ENCODE measurements at regions of chr9 and their contacts with region 1.

Region 1: GRCh38 chr9:21831961-21832509 is 29.6 kb downstream of the MTAP start:
- DNase-seq: peak; percentile 67 to 88
- ATAC-seq: peak; percentile 89 to 96
- H3K4me3 ChIP-seq: no peak overlapping the region
- H3K27ac ChIP-seq: peak overlapping the region; percentile 85 to 90
- H3K4me1 ChIP-seq: peaks cover 52% of the 10 kb centered on the region
- CTCF ChIP-seq: no peak
- EP300 ChIP-seq: peak; percentile 27 to 71; a peak in 2 of 5 replicates
- POLR2A ChIP-seq: no peak
- RAD21 ChIP-seq: no peak

Region 2: DNA sequence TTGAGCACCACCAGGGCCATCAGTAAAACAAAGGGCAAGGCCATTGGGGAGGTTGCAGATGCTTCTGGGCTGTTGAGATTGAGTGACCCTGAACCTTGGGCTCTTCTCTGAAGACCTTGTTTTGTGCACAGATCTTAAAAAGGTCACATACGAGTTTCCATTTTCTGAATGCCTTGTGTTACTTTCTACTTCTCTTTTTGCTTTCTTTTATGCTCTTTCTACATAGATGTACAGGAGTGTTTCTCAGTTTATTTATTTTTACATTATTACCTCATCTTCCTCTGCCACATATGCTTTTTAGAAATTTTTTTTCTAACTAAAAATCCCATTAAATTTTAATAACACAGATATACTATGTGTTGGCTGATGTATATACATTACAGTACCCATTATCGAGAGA is 526.8 kb before region 1 on chr9 and contains the start of gene IFNA5:
- CTCF ChIA-PET with region 1: no interaction called
- POLR2A ChIA-PET with region 1: no interaction called
- DNase-seq: no peak
- ATAC-seq: no peak
- H3K4me3 ChIP-seq: no peak within 1 kb of the TSS
- H3K27ac ChIP-seq: no peak within 1 kb of the TSS
- H3K4me1 ChIP-seq: no peaks in the 10 kb centered on the region
- CTCF ChIP-seq: no peak
- EP300 ChIP-seq: no peak
- POLR2A ChIP-seq: no peak
- RAD21 ChIP-seq: no peak
- polyA plus RNA-seq, gene IFNA5: not detected in 2 replicates

Region 3: DNA sequence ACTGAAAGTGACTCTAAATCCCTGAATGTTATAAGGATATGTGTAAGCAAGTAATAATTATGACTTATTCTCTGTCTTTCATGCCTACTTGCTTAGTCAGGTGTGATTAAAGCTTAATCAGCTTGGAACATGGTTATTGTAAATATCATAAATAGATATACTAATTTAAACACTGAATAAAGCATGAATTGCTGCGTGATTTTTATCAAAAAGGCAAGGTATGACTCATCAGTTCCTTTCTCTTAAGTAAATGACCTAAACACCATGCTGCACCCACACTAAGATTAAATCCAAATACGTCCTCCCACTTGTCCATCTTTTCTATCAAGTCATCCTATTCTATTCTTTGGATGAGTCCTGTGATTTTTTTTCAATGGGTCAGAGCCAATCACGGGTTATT is 154.2 kb before region 1 on chr9:
- CTCF ChIA-PET with region 1: no interaction called
- POLR2A ChIA-PET with region 1: no interaction called
- DNase-seq: peak; percentile 43 to 95
- ATAC-seq: peak; percentile 58 to 78; a peak in 5 of 6 replicates
- H3K4me3 ChIP-seq: peak overlapping the region; percentile 21; the same call in 1 of the 3 replicates
- H3K27ac ChIP-seq: peak overlapping the region; percentile 87 to 94
- H3K4me1 ChIP-seq: peaks cover 77% of the 10 kb centered on the region
- CTCF ChIP-seq: no peak
- EP300 ChIP-seq: peak; percentile 63 to 78; a peak in 3 of 5 replicates
- POLR2A ChIP-seq: no peak
- RAD21 ChIP-seq: peak; percentile 19 to 35; a peak in 3 of 5 replicates

Region 4: DNA sequence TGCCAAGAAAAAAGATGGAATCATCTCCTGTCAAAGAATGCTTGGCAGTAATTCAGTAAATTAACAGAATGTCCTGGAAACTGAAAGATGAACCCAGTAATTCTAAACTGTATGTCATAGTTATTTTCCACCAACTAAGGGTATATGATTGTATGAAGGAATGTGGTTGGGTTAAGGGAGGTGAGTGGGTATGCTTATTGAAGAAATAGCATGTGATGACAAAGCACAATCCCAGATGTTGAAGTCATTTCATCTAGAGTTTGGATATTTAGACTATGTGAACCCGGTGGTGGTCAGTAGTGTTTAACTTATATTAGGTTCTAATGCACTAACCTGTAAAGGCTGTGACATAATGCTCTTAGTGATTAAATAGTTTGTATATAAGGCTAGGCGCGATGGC is 74.8 kb after region 1 on chr9:
- CTCF ChIA-PET with region 1: interaction called, 4 read pairs
- POLR2A ChIA-PET with region 1: interaction called, 11 read pairs
- DNase-seq: peak in 1 of 2 experiments; percentile 0
- ATAC-seq: no peak
- H3K4me3 ChIP-seq: no peak overlapping the region
- H3K27ac ChIP-seq: peak overlapping the region; percentile 12 to 79; a peak in 5 of 6 replicates
- H3K4me1 ChIP-seq: peaks cover 4% of the 10 kb centered on the region; the same call in 1 of the 3 replicates
- CTCF ChIP-seq: no peak
- EP300 ChIP-seq: no peak
- POLR2A ChIP-seq: no peak
- RAD21 ChIP-seq: no peak

Region 5: DNA sequence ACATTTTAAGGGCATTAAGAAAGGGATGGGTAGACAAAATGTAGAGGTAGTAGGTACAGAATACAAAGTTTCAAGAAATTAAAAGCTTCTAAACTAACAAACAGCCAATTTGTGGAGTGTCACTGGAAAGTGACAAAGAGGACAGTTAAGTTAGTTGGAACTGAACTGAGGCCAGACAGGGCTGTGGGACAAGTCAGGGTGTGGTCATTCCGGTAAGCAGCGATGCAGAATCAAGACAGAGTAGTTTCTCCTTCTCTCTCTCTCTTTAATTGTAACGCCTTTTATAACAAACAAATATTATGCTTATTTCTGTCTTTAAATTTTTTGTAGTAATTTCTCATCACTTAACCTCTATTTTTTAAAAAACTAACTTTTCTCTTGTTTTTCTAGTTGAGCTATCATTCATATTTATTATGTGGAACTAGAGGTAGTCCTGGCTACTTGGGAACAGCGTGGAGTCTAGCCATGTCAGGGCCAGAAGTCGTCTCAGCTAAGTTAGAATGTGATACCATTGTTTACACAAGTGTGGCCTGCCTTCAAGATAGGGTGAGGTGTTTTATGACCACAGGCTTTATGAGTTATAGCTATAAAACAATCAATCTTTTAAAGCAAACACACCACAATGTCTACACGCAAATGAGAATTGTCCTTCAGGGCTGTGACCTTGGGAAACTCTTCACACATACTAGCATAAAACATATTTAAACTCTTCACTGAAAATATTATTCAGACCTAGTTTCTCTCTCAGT is 292.4 kb after region 1 on chr9:
- CTCF ChIA-PET with region 1: interaction called, 15 read pairs
- POLR2A ChIA-PET with region 1: interaction called, 14 read pairs
- DNase-seq: peak; percentile 14 to 47
- ATAC-seq: peak in 1 of 2 experiments; percentile 73; a peak in 3 of 6 replicates
- H3K4me3 ChIP-seq: no peak overlapping the region
- H3K27ac ChIP-seq: peak overlapping the region; percentile 29 to 74; a peak in 4 of 6 replicates
- H3K4me1 ChIP-seq: peaks cover 46% of the 10 kb centered on the region
- CTCF ChIP-seq: no peak
- EP300 ChIP-seq: 0 out of 5 replicates have a peak, but pooled peaks of 1 of the 2 experiments have one; percentile 3
- POLR2A ChIP-seq: no peak
- RAD21 ChIP-seq: no peak